Ascending aorta (tissue), 2 donors: ENCODE measurements at regions of chr11 and their contacts with region 1.

Region 1: DNA sequence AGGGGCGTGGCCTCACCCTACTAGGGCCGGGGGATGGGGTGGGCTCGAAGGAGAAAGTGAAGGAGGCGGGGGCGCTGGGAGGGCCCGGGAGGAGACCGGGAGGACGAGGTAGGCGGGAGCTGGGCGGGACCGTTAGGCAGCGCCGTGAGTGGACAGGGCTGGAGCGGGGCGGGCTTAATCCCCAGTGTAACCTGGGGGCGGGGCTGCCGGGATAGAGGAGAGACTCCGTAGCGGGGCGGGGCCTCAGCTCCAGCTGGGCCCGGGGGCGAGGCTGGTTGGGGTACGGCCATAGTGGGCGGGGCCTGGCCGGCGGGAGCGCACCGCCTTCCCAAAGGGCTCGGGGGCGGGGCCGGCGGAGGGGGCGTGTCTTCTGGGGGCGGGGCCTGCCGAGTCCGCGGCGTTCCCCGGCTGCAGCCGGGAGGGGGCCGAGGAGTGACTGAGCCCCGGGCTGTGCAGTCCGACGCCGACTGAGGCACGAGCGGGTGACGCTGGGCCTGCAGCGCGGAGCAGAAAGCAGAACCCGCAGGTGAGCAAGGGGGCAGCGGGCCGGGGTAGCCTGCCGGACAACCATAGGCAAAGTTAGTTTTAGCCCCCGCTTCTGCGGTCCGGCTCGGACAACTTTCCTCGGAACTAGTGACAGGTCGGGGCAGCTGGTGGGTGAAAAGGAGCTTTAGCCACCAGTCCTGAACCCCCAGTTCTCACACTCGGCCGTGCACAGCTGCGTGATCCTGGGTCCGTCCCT is at the start of gene CD82:
- DNase-seq: peak; percentile 99 to 100
- H3K4me3 ChIP-seq: peak within 1 kb of the TSS; percentile 61 to 65
- H3K27ac ChIP-seq: peak within 1 kb of the TSS; percentile 98 to 99
- H3K4me1 ChIP-seq: peaks cover 14 to 43% of the 10 kb centered on the region in 2 donors
- H3K27me3 ChIP-seq: no peaks in the 10 kb centered on the region
- CTCF ChIP-seq: peak; percentile 34 to 44 (median 41)
- total RNA-seq, gene CD82: 28.3 TPM

Region 2: DNA sequence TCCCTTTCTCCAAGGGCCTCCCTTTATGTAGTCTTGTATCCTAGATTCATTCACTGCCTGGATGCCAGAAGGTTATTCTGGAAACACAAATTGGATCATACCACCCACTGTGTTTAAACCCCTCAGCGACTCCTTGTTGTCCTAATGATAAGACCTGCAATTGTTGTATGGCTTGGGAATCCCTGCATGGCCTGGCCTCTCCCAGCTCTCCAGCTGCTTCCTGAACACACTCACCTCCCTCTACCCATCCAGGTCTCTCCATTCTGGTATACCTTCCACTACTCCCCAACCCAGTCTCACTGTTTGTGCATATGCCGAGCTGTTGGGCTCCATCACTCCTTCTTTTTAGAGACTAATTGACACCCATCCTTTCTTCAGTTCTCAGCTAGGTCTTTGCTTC is 131.2 kb before region 1 on chr11:
- intact Hi-C with region 1: no loop called
- DNase-seq: no peak
- H3K4me3 ChIP-seq: no peak overlapping the region
- H3K27ac ChIP-seq: no peak overlapping the region
- H3K4me1 ChIP-seq: no peaks in the 10 kb centered on the region
- H3K27me3 ChIP-seq: no peaks in the 10 kb centered on the region
- CTCF ChIP-seq: no peak

Region 3: DNA sequence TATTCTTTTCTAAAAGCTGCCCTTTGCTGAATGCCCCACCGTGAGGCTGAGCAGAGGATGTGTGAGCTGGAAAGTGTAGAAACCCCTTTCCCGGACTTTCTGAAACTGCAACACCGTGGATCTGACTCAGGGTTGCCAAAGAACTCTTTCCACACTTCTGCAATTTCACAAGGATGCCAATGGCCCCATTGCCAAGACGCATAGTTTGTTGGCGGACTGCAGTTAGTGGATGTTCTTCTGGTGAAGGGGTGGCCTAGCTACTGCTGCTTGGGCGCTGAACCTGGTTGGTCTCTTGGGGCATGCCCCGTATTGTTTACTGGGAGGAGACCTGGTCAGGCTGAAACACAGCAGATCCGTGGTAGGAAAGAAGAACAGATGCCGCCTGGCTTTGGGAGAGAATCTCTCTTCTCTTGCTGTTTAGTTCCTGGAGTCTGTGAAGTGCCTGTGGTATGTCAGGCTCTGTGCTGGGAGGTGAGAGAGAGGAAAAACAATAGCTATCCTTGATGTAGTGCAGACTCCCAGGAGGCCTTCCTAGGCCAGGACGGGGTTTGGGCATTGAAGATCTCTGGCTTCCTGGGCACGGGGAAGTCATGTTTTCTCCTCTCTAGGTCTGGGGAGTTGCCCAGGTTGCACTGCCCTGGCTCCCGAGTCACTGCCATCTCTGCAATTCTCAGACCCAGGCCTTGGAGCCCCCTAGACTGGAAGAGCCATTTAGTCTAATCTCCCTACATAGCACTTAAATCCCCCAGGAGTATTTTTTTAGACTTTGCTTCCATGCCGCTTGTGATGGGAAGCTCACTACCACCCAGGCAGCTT is 27.0 kb after region 1 on chr11:
- intact Hi-C with region 1: loop called (anchors 1 kb)
- DNase-seq: peak; percentile 39 to 93
- H3K4me3 ChIP-seq: no peak overlapping the region
- H3K27ac ChIP-seq: peak overlapping the region; percentile 86 to 90
- H3K4me1 ChIP-seq: peaks cover 23 to 42% of the 10 kb centered on the region in 2 donors
- H3K27me3 ChIP-seq: no peaks in the 10 kb centered on the region
- CTCF ChIP-seq: no peak

Region 4: GRCh38 chr11:44611687-44612434 is 46.5 kb after region 1 on chr11:
- intact Hi-C with region 1: loop called (anchors 1 kb)
- DNase-seq: no peak
- H3K4me3 ChIP-seq: no peak overlapping the region
- H3K27ac ChIP-seq: peak overlapping the region; percentile 33 to 58
- H3K4me1 ChIP-seq: peaks cover 22 to 54% of the 10 kb centered on the region in 2 donors
- H3K27me3 ChIP-seq: no peaks in the 10 kb centered on the region
- CTCF ChIP-seq: no peak

Region 5: GRCh38 chr11:45089676-45090499 is 524.5 kb after region 1 on chr11:
- intact Hi-C with region 1: loop called (anchors 5 kb)
- DNase-seq: peak in 1 of 2 donors; percentile 53
- H3K4me3 ChIP-seq: no peak overlapping the region
- H3K27ac ChIP-seq: peak overlapping the region; percentile 75 to 89
- H3K4me1 ChIP-seq: peaks cover 4 to 30% of the 10 kb centered on the region in 2 donors
- H3K27me3 ChIP-seq: no peaks in the 10 kb centered on the region
- CTCF ChIP-seq: peak in 1 of 3 experiments; percentile 21

Region 6: GRCh38 chr11:45655347-45655756 is 1090.0 kb after region 1 on chr11:
- intact Hi-C with region 1: loop called (anchors 10 kb)
- DNase-seq: peak in 1 of 2 donors; percentile 84
- H3K4me3 ChIP-seq: no peak overlapping the region
- H3K27ac ChIP-seq: no peak overlapping the region
- H3K4me1 ChIP-seq: peaks cover 4 to 47% of the 10 kb centered on the region in 2 donors
- H3K27me3 ChIP-seq: no peaks in the 10 kb centered on the region
- CTCF ChIP-seq: peak; percentile 69 to 97 (median 94)